SK-N-SH (cell line): ENCODE measurements at regions of chr12 and their contacts with region 1.

Region 1: GRCh38 chr12:96516472-96517430 is 27.4 kb downstream of the CFAP54 start:
- DNase-seq: peak; percentile 45
- H3K4me3 ChIP-seq: peak overlapping the region in 1 of 2 experiments; percentile 33; a peak in 1 of 4 replicates
- H3K27ac ChIP-seq: no peak overlapping the region
- H3K4me1 ChIP-seq: peaks cover 0 to 4% of the 10 kb centered on the region in 2 experiments; a peak in 1 of 4 replicates
- H3K27me3 ChIP-seq: no peaks in the 10 kb centered on the region
- CTCF ChIP-seq: peak; percentile 78
- EP300 ChIP-seq: no peak
- RAD21 ChIP-seq: peak; percentile 93

Region 2: GRCh38 chr12:96061864-96062453 is 454.8 kb before region 1 on chr12:
- CTCF ChIA-PET with region 1: interaction called, 27 read pairs
- POLR2A ChIA-PET with region 1: no interaction called
- DNase-seq: peak; percentile 69
- H3K4me3 ChIP-seq: peak overlapping the region in 1 of 2 experiments; percentile 36; a peak in 1 of 4 replicates
- H3K27ac ChIP-seq: no peak overlapping the region
- H3K4me1 ChIP-seq: 0 out of 4 replicates have a peak, but pooled peaks cover 0 to 4% of the 10 kb centered on the region in 2 experiments
- H3K27me3 ChIP-seq: no peaks in the 10 kb centered on the region
- CTCF ChIP-seq: peak; percentile 83
- EP300 ChIP-seq: no peak
- RAD21 ChIP-seq: peak; percentile 96

Region 3: DNA sequence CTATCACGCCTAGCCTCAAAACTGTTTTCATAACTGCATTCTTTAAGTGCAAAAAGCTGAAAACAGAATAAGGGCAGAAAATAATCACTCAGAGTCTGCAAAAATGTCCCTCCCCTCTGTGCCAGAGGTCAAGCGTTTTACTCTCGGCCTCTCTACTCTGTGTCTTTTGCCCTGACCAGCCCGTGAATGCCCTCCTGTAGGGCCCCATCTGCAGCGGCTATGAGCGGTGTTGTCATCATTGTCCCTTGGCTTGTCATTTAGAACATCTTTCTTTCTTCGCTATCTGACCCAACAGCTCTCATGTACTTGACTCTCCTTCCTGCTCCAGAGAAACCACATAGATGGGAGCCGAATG is 300.9 kb before region 1 on chr12:
- CTCF ChIA-PET with region 1: interaction called, 17 read pairs
- POLR2A ChIA-PET with region 1: no interaction called
- DNase-seq: no peak
- H3K4me3 ChIP-seq: no peak overlapping the region
- H3K27ac ChIP-seq: no peak overlapping the region; a peak in 1 of 4 replicates
- H3K4me1 ChIP-seq: peaks cover 11 to 17% of the 10 kb centered on the region in 2 experiments
- H3K27me3 ChIP-seq: no peaks in the 10 kb centered on the region
- CTCF ChIP-seq: no peak
- EP300 ChIP-seq: no peak
- RAD21 ChIP-seq: no peak

Region 4: DNA sequence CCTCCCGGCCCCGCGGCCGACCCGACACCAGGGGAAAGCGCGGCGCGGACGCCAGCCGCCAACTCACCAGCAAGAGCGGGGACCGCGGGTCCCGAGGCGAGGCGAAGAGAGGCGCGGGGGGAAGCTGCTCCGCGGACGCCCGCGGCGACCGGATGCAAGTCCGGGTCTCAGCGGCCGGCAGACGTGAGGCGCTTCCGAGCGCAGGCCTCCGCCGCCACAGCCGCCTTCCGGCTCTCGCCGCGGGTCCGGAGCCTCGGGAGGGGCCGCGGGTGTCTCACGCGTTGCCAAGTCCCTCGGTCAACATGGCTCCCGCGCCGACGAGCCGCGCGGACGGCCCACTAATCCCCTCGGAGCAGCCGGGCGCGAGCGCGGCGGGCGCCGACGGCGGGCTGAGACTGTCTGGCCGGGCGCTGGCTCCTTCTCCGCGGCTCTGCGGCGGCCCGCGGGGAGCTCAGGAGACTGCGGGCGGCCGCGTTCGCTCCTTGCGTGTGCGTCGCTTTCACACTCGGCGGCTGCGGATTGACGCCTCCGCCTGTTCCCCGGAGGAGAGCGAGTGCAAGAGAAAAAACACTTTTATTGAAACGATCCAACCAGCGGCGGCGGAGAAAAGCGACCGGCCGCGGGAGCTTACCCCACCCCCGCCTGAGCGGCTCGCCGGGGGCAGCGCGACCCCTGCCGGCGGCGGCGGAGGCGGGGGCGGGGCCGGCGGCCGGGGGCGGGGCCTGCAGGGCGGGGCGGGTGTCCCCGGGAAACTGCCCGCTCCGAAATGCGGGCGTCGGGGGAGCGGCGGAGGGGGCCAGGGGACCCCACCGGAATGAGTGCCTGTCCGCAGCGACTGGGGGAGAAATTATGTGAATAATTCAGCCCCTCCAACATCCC is 116.6 kb before region 1 on chr12 and contains the start of gene CDK17:
- CTCF ChIA-PET with region 1: interaction called, 20 read pairs
- POLR2A ChIA-PET with region 1: no interaction called
- DNase-seq: peak; percentile 97
- H3K4me3 ChIP-seq: peak within 1 kb of the TSS; percentile 88 to 90
- H3K27ac ChIP-seq: peak within 1 kb of the TSS; percentile 93 to 97
- H3K4me1 ChIP-seq: peaks cover 2 to 15% of the 10 kb centered on the region in 2 experiments; a peak in 2 of 4 replicates
- H3K27me3 ChIP-seq: no peaks in the 10 kb centered on the region
- CTCF ChIP-seq: peak; percentile 39
- EP300 ChIP-seq: 0 out of 4 replicates have a peak, but pooled peaks of 1 of the 2 experiments have one; percentile 31
- RAD21 ChIP-seq: peak; percentile 44
- polyA plus RNA-seq, gene CDK17: 11.7 and 12.4 TPM in 2 replicates

Region 5: DNA sequence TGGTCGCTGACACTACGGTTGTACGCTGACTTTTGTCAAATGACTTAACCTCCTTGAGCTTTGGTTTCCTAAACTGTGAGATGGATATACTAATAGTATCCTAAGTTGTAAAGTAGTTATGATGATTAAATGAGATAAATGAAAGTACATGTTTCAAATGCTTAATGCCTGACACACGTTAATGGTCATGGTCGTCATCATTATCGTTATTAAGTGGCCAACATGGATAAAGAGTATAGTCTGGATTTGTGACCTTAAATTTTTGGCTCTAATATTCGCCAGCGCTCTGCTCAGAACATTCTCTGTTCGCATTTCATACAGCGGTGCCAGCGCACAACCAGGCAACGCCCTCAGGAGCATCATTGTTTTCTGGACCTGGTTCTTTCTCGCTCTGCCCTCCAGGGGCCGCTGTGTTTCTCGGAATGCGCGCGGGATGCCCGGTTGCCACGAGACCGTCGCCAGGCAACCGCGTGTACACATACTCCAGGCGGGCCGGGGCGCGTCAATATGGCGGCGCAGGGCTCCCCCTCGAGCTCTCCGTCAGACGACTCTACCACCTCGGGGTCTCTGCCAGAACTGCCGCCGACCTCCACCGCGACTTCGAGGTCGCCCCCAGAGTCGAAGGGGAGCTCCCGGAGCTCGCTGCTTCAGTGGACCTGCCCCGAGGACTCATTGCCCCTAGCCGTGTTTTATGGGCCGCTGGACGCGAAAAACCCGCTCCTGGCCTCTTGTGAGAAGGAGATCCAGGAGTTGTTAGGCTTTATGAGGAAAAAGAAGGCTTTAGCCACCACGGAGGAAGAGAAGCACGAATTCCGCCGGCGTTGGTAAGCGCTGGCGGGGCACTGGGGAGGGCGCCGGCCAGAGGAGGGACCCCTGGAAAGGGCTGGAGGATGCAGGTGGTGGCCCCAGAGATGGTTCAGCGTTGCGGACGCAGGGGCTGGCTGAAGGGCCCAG is 27.4 kb before region 1 on chr12 and contains the start of gene CFAP54:
- CTCF ChIA-PET with region 1: interaction called, 24 read pairs
- POLR2A ChIA-PET with region 1: no interaction called
- DNase-seq: peak; percentile 93
- H3K4me3 ChIP-seq: peak within 1 kb of the TSS; percentile 79 to 86
- H3K27ac ChIP-seq: peak within 1 kb of the TSS in 1 of 2 experiments; percentile 93; a peak in 3 of 4 replicates
- H3K4me1 ChIP-seq: peaks cover 2 to 12% of the 10 kb centered on the region in 2 experiments; a peak in 2 of 4 replicates
- H3K27me3 ChIP-seq: no peaks in the 10 kb centered on the region
- CTCF ChIP-seq: peak; percentile 85
- EP300 ChIP-seq: no peak
- RAD21 ChIP-seq: peak; percentile 69
- polyA plus RNA-seq, gene CFAP54: 0.87 and 1.1 TPM in 2 replicates